AG04450 (cell line): ENCODE measurements at regions of chr3 and their contacts with region 1.

Region 1: DNA sequence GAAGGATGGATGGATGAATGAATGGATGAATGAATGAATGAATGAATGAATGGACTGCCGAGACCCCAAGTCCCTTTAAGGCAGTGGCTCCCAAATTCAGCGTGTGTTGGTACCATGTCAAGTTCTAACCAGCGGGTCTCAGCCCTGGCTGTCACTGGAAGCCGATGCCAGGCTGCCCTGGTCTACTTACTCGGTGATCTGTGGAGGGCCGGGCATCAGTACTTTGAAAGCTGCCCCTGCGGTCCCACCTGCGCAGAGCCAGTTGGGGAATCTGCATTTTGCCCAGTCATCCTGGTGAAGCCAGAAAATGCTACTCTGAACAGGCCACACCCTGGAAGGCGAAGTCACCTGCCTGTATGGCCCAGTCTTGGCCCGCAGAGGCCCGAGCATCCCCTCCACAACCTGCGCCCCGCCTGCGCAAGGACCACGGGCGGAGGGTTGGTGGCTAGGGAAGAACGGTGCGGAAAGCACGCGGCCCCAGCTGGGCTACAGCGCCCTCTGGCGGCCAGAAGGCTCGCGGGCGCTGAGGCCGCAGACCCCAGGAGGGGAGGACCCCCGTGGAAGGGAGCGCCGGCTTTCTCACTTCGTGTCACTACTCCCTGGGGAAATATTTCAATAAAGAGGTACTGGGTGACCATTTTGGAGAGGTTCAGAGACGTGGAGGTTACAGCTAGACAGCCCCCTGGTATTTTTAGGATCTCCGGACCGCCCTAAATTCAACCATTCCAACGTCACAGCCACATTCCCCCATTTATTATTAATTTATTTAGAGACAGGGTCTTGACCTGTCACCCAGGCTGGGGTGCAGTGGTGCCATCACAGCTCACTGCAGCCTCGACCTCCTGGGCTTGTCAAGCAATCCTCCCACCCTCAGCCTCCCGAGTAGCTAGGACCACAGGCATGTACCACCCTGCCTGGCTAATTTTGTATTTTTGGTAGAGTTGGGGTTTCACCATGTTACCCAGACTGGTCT is 34.9 kb downstream of the PRKCD start:
- DNase-seq: no peak
- H3K4me3 ChIP-seq: no peak overlapping the region
- H3K27ac ChIP-seq: no peak overlapping the region
- H3K27me3 ChIP-seq: no peaks in the 10 kb centered on the region
- CTCF ChIP-seq: peak; percentile 98

Region 2: DNA sequence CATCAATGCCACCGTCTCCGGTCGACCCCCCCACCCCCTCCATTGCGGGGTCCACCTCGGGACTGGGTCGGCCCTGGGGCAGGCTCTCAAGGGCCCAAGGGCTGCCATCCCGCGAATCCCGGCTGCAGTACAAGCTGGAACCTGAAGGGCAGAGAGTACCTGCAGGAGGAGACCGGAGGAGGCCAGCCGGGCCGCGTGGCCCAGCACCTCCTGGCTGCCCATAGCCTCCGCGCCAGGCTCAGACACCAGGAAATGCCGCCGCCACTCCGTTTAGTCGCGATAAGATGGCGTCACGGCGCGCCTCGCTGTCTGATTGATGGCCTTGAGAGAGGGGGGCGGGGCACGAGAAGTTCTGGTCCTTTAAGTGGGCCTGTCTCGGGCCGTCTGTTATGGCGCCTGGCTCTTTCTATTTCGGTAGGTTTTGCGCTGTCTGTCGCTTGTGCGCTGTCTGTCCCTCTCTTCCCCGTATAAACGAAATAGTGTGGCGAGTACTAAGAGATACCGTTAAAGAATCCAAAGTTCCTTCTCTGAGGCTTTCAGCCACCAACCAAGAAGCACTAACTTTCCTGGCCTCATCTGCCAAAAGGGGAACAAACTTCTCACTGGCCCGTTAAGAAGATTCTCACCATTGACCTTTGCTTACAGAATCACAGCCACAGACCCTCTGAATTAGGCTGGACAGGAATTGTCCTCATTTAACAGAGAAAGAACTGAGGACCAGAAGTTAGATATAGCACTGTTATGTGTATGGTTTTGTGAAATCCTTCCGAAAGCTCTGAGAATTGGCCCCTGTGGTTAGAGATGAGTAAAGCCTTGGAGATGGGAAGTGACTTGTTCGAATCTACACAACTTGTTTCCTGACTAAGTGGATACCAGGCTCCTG is 65.5 kb before region 1 on chr3 and contains the start of gene RFT1:
- CTCF ChIA-PET with region 1: interaction called, 104 read pairs
- POLR2A ChIA-PET with region 1: no interaction called
- DNase-seq: peak; percentile 84
- H3K4me3 ChIP-seq: peak within 1 kb of the TSS; percentile 96
- H3K27ac ChIP-seq: peak within 1 kb of the TSS; percentile 82
- H3K27me3 ChIP-seq: no peaks in the 10 kb centered on the region
- CTCF ChIP-seq: peak; percentile 15
- polyA plus RNA-seq, gene RFT1: 24.7 and 26.4 TPM in 2 replicates

Region 3: GRCh38 chr3:53140847-53141845 is 54.7 kb before region 1 on chr3:
- CTCF ChIA-PET with region 1: interaction called, 19 read pairs
- POLR2A ChIA-PET with region 1: no interaction called
- DNase-seq: no peak
- H3K4me3 ChIP-seq: no peak overlapping the region
- H3K27ac ChIP-seq: no peak overlapping the region
- H3K27me3 ChIP-seq: no peaks in the 10 kb centered on the region
- CTCF ChIP-seq: no peak

Region 4: GRCh38 chr3:53162672-53163443 is 33.0 kb before region 1 on chr3:
- CTCF ChIA-PET with region 1: interaction called, 10 read pairs
- POLR2A ChIA-PET with region 1: no interaction called
- DNase-seq: no peak
- H3K4me3 ChIP-seq: peak overlapping the region; percentile 79
- H3K27ac ChIP-seq: no peak overlapping the region
- H3K27me3 ChIP-seq: peaks cover 5% of the 10 kb centered on the region
- CTCF ChIP-seq: no peak

Region 5: DNA sequence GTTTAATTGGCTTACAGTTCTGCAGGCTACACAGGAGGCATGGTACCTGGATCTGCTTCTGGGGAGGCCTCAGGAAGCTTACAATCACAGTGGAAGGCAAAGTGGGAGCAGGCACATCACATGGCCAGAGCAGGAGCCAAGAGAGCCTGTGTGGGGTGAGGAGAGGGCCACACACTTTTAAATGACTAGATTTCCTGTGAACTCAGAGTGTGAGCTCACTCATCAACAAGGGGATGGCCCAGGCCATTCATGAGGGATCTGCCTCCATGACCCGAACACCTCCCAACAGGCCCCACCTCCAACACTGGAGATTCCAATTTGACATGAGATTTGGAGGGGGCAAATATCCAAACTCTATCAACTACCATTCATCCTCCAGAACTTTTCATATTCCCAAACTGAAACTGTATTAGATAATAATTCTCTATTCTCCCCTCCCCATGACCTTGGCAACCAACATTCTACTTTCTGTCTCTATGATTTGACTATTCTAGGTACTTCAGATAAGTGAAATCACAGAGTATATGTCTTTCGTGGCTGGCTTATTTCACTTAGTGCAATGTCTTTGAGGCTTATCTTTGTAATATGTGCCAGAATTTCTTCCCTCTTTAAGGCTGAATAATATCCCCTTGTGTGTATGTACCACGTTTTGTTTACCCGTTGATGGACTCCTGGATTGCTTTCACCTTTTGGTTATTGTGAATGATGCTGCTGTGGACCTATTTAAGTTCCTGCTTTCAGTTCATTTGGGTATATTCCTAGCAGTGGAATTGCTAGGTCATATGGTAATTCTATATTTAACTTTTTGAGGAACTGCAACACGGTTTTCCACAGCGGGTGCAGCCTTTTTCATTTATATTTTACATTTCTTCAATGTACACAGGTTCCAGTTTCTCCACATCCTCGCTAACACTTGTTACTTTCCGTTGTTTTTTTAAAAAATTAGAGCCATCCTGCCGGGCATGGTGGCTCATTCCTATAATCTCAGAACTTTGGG is 16.1 kb after region 1 on chr3:
- CTCF ChIA-PET with region 1: interaction called, 21 read pairs
- POLR2A ChIA-PET with region 1: interaction called, 6 read pairs
- DNase-seq: no peak
- H3K4me3 ChIP-seq: no peak overlapping the region
- H3K27ac ChIP-seq: no peak overlapping the region
- H3K27me3 ChIP-seq: no peaks in the 10 kb centered on the region
- CTCF ChIP-seq: no peak